Transverse colon (tissue), 4 donors: ENCODE measurements at regions of chr9 and their contacts with region 1.

Region 1: GRCh38 chr9:128969491-128969890 is 22.0 kb downstream of the NUP188 start:
- DNase-seq: no peak
- H3K4me3 ChIP-seq: no peak overlapping the region
- H3K27ac ChIP-seq: no peak overlapping the region
- H3K4me1 ChIP-seq: no peaks in the 10 kb centered on the region
- H3K27me3 ChIP-seq: no peaks in the 10 kb centered on the region
- CTCF ChIP-seq: no peak
- EP300 ChIP-seq: no peak
- POLR2A ChIP-seq: no peak

Region 2: DNA sequence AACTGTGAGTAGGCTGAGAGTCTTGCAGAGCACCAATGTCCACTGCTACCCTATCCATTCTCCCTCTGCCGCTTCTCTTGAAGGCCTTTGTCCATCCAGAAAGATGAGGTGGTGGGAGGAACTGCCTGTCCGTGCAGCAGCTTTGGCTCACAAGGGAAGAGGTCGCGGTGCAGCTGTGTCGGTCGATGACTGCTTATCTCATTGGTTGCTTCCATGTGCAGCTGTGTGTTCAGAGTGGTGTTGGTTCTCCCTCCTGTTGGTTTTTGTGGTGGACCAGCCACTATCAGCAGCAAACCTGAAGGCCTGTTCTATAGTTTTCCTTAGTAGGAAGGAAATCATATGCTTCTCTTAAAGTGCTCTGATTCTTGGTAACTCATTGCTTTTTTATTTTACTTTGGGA is 376.5 kb before region 1 on chr9:
- in situ Hi-C with region 1: no loop called
- intact Hi-C with region 1: loop called (anchors 10 kb)
- DNase-seq: no peak
- H3K4me3 ChIP-seq: no peak overlapping the region
- H3K27ac ChIP-seq: no peak overlapping the region
- H3K4me1 ChIP-seq: no peaks in the 10 kb centered on the region
- H3K27me3 ChIP-seq: no peaks in the 10 kb centered on the region
- CTCF ChIP-seq: no peak
- EP300 ChIP-seq: no peak
- POLR2A ChIP-seq: no peak

Region 3: GRCh38 chr9:128911529-128912035 is 57.9 kb before region 1 on chr9:
- in situ Hi-C with region 1: no loop called
- intact Hi-C with region 1: no loop called
- DNase-seq: no peak
- H3K4me3 ChIP-seq: no peak overlapping the region
- H3K27ac ChIP-seq: peak overlapping the region; percentile 22 to 68 (median 64)
- H3K4me1 ChIP-seq: peaks cover 36 to 41% (median 38%) of the 10 kb centered on the region in 4 donors
- H3K27me3 ChIP-seq: no peaks in the 10 kb centered on the region
- CTCF ChIP-seq: no peak
- EP300 ChIP-seq: no peak
- POLR2A ChIP-seq: no peak

Region 4: GRCh38 chr9:128947422-128948301 is 21.8 kb before region 1 on chr9 and contains the starts of genes DOLK and NUP188:
- in situ Hi-C with region 1: no loop called
- intact Hi-C with region 1: no loop called
- DNase-seq: peak; percentile 98
- H3K4me3 ChIP-seq: peak within 1 kb of the TSS; percentile 75 to 94 (median 85)
- H3K27ac ChIP-seq: peak within 1 kb of the TSS; percentile 94 to 97 (median 97)
- H3K4me1 ChIP-seq: peaks cover 0 to 18% (median 11%) of the 10 kb centered on the region in 4 donors
- H3K27me3 ChIP-seq: no peaks in the 10 kb centered on the region
- CTCF ChIP-seq: peak in 1 of 5 experiments; percentile 13
- EP300 ChIP-seq: no peak
- POLR2A ChIP-seq: peak; percentile 86
- total RNA-seq, gene DOLK: 9.2 to 20.6 (median 11.7) TPM
- total RNA-seq, gene NUP188: 18.0 to 79.3 (median 38.4) TPM

Region 5: DNA sequence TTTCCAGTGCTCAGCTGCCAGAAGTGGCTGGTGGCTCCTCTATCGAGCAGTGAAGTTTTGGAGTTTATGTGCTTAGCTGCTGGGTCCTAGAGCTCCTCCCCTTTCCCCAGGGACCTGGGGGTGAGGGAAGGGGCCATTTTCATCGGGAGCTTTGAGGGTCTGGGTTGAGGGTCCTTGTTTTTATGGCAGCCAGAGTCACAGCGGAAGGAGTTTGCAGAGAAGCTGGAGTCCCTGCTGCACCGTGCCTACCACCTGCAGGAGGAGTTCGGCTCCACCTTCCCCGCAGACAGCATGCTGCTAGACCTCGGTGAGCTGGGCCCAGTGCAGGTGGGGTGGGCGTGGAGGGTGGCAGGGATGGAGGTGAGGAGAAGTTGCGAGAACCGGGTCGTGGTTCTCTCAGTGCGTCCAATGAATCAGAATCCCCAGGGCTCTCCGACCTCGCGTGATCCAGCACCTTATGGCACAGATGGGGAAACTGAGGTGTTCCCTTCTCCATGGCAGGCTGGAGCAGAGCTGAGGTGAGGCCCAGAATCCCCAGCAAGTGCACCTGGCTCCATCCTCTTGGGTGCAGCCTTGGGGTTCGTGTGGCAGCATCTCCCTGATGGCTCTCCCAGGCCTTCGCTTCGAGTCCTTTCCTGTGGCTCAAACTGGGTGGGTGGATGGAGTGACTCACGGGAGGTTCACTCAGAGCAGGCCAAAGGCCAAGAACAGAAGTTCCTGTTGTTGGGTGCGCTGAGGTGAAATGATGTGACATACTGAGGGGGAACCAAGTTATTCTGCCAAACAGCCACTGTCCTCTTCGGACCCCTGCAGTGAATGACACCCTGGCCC is 89.7 kb after region 1 on chr9:
- in situ Hi-C with region 1: no loop called
- intact Hi-C with region 1: no loop called
- DNase-seq: no peak
- H3K4me3 ChIP-seq: no peak overlapping the region
- H3K27ac ChIP-seq: no peak overlapping the region
- H3K4me1 ChIP-seq: no peaks in the 10 kb centered on the region
- H3K27me3 ChIP-seq: no peaks in the 10 kb centered on the region
- CTCF ChIP-seq: no peak
- EP300 ChIP-seq: no peak
- POLR2A ChIP-seq: no peak

Region 6: DNA sequence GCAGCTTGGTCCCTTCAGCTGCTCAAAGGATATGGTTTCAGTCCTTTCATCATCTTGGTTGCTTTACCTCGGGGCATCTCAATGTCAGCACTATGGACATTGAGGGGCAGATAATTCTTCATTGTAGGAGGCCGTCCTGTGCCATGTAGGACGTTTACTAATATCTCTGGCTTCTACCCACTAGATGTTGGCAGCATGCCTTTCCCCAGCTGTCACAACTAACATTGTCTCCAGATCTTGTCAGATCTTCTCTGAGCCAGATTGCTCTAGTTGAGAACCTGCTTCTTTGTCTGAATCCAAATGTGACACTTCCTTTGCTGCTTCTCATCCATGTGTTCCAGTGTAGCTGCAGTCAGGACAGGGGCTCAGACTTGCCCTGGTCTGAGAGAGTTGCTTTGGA is 152.0 kb after region 1 on chr9:
- in situ Hi-C with region 1: no loop called
- intact Hi-C with region 1: no loop called
- DNase-seq: no peak
- H3K4me3 ChIP-seq: no peak overlapping the region
- H3K27ac ChIP-seq: no peak overlapping the region
- H3K4me1 ChIP-seq: no peaks in the 10 kb centered on the region
- H3K27me3 ChIP-seq: no peaks in the 10 kb centered on the region
- CTCF ChIP-seq: no peak
- EP300 ChIP-seq: no peak
- POLR2A ChIP-seq: no peak